MCF 10A (cell line): ENCODE measurements at regions of chr7 and their contacts with region 1.

Region 1: DNA sequence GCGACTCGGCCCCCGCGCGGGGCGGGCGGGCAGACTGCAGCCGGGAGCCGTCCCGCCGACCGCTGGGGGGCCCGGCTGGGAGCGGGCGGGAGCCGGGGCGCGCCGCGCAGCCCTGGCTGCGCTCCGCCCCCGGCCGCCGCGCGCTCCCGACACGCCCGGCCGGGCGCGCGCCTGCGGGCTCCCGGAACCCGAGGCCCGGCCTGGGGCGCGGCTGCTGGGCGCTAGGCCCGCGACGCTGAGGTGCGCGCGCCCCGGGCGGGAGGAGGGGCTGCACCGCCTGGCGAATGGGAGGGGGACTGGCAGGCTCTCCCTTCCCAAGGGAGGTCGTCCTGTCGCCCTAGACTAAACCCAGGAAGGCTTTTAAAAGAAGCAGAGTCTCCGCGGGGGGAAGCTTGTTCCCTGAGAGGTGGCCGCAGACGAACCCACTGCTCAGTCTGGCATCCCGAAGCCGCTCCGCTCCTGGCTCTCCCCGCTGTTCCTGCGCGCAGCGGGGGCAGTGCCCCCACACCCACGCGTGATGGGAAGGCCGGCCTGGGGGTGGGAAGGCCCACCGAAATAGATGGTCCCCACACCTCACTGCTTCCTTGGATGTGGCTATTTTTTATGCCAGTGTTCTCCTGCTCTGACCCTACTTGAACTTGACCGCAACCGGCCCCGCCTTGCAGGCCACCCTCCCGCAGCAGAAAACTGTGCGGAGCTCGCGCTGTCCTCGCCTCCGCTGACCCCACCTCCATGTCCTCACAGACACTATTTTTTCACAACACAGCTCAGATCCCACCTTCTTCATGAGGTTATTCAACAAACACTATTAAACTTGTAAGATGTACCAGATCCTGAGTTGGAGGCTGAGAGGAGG is at the start of gene VOPP1:
- DNase-seq: peak; percentile 51
- H3K4me3 Mint-ChIP-seq: peak within 1 kb of the TSS; percentile 86
- H3K27ac Mint-ChIP-seq: peak within 1 kb of the TSS; percentile 9
- H3K4me1 Mint-ChIP-seq: peaks cover 36% of the 10 kb centered on the region
- H3K27me3 Mint-ChIP-seq: no peaks in the 10 kb centered on the region
- CTCF ChIP-seq: no peak
- total RNA-seq, gene VOPP1: 29.2 and 35.7 TPM in 2 replicates

Region 2: DNA sequence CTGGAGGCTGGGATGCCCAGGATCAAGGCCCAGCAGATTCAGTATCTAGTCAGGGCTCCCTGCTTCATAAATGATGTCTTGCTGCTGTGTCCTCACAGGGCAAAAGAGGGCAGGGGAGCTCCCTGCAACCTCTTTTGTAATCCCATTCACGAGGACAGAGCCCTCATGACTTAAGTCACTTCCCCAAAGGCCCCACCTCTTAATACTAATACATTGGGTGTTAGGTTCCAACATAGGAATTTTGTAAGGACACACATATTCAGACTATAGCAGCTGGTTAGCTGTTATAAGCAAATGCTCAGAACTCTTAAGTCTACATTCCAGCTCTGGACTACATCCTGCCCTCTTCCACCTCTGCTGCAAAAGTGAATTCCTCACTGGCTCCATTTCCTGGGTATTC is 63.3 kb before region 1 on chr7:
- CTCF ChIA-PET with region 1: no interaction called
- POLR2A ChIA-PET with region 1: no interaction called
- intact Hi-C with region 1: loop called (anchors 1 kb)
- DNase-seq: peak; percentile 8
- H3K4me3 Mint-ChIP-seq: no peak overlapping the region
- H3K27ac Mint-ChIP-seq: no peak overlapping the region
- H3K4me1 Mint-ChIP-seq: peaks cover 23% of the 10 kb centered on the region
- H3K27me3 Mint-ChIP-seq: no peaks in the 10 kb centered on the region
- CTCF ChIP-seq: no peak

Region 3: DNA sequence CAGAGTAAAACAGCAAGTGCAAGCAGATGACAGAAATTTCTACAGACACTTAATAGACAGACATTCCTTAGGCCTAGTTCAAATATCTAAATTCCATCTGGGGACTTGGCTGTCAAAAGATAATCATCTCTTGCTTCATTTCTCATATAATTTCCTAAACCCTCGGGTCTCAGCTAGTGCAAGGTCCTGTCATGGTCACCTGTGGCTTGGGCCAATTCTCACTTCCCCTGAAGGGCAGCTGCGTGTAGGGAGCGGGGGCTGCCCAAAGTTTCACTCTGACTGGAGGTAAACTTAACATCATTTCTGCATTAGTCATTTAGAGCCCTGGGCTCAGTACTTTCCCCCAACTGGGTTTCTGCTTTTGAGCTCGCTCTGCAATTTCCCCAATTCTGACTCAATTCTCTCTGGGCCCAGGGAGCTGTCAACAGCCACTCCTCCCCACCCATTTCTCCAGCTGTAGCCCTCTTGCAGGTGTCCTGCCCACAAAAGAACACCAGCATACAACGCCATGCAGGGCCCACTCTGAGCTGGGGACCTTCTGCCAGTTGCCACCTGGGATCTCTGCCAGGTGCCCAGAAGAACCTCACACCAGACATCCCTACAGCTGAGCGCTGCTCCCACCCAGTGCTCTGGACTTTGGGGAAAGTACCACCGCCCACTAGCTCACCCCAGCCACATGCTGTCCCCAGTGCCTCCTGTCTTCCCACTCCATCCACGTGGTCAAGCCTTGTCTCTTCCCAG is 38.3 kb before region 1 on chr7:
- CTCF ChIA-PET with region 1: interaction called, 5 read pairs
- POLR2A ChIA-PET with region 1: interaction called, 17 read pairs
- intact Hi-C with region 1: no loop called
- DNase-seq: peak; percentile 83
- H3K4me3 Mint-ChIP-seq: peak overlapping the region; percentile 1
- H3K27ac Mint-ChIP-seq: peak overlapping the region; percentile 69
- H3K4me1 Mint-ChIP-seq: peaks cover 61% of the 10 kb centered on the region
- H3K27me3 Mint-ChIP-seq: no peaks in the 10 kb centered on the region
- CTCF ChIP-seq: no peak

Region 4: DNA sequence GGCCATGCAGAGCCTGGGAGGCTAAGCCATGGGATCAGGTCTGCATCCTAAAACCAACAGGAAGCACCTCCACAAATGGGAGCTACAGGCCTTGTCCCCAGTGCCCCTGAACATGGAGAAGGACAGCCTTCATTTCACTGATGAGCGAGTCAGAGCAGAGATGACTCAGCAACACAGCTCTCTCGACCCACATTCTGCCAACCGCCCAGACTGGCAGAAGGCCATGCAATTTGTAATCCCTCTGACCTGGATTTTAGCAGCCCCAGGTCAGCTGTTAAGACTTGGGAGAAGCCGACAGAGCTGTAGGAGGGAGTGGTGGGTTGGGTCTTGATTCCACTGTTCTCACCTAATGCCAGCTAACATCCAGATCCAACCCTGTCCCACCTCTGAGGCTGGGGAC is 25.8 kb before region 1 on chr7:
- CTCF ChIA-PET with region 1: interaction called, 9 read pairs
- POLR2A ChIA-PET with region 1: interaction called, 62 read pairs
- intact Hi-C with region 1: no loop called
- DNase-seq: peak; percentile 97
- H3K4me3 Mint-ChIP-seq: peak overlapping the region; percentile 6
- H3K27ac Mint-ChIP-seq: no peak overlapping the region
- H3K4me1 Mint-ChIP-seq: peaks cover 46% of the 10 kb centered on the region
- H3K27me3 Mint-ChIP-seq: no peaks in the 10 kb centered on the region
- CTCF ChIP-seq: no peak

Region 5: DNA sequence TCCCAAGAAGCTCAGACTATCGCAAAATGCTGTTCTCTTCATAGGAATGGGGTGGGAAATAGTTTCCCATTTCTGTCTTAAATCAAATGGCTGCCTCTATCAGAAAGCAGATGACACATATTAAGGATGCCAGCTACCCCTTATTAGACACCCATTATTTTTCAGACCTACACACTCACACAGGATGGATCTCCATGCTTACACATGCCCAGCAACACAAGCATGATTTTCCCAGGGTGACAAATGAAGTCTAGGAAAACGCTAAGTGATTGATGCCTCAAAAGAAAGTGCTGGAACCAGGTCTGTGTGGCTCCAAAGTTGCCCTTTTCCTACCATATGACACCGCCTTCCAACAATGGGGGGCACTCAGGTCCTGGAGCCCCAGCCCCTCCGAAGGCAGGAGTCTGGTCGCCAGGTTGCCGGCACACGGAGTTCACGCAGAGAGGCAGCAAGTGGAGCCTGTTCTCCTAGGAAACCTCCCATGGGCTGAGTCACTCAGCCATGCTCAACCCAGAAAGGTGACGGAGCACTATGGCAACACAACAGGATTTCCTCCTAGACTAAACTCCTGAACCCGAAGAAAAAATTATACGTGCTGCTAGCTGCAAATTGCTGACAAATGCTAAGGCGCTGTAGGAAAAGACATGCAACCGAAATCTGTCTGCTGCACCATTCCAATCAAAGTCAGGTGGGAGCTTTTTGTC is 20.1 kb before region 1 on chr7:
- CTCF ChIA-PET with region 1: interaction called, 4 read pairs
- POLR2A ChIA-PET with region 1: interaction called, 62 read pairs
- intact Hi-C with region 1: no loop called
- DNase-seq: peak; percentile 71
- H3K4me3 Mint-ChIP-seq: peak overlapping the region; percentile 54
- H3K27ac Mint-ChIP-seq: peak overlapping the region; percentile 75
- H3K4me1 Mint-ChIP-seq: peaks cover 56% of the 10 kb centered on the region
- H3K27me3 Mint-ChIP-seq: no peaks in the 10 kb centered on the region
- CTCF ChIP-seq: no peak

Region 6: DNA sequence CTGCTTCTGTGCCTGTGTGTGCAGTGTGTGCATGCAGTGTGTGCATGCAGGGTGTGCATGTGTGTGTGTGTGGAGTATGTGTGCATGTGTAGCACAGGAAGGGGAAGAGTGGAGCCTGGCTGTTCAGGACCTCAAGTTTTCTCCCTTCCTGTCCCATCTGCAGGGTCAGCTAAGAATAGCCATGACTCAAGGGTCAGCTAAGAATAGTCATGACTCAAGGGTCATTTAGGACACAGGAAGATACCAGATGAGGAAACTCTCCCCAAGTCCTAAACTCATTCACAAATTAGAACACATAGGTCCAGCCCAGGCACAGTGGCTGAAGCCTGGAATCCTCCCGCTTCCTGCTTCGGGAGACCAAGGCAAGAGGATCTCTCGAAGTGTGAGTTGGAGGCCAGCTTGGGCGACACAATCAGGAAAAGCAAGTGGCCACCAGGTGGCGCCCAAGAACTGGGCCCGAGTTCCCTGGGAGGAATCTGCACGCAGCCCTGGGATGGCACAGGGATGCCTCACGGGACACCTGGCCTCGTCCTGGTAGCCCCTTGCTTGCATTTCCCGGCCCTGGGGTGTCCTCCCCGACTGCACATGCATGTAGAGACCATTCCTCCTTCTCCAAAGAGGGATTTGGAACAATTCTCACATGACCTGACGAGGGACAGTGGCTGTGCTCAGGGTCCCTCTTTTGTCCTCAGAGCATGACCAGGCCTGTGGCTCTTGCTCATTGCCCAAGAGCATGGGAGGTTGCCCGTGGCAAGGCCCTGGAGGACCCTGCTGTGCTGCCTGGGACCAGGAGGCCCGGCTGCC is 21.1 kb after region 1 on chr7:
- CTCF ChIA-PET with region 1: interaction called, 17 read pairs
- POLR2A ChIA-PET with region 1: interaction called, 3 read pairs
- intact Hi-C with region 1: no loop called
- DNase-seq: peak; percentile 75
- H3K4me3 Mint-ChIP-seq: no peak overlapping the region
- H3K27ac Mint-ChIP-seq: no peak overlapping the region
- H3K4me1 Mint-ChIP-seq: peaks cover 6% of the 10 kb centered on the region
- H3K27me3 Mint-ChIP-seq: peaks cover 10% of the 10 kb centered on the region
- CTCF ChIP-seq: peak; percentile 85